PC-9 (cell line): ENCODE measurements at regions of chr1 and their contacts with region 1.

Region 1: DNA sequence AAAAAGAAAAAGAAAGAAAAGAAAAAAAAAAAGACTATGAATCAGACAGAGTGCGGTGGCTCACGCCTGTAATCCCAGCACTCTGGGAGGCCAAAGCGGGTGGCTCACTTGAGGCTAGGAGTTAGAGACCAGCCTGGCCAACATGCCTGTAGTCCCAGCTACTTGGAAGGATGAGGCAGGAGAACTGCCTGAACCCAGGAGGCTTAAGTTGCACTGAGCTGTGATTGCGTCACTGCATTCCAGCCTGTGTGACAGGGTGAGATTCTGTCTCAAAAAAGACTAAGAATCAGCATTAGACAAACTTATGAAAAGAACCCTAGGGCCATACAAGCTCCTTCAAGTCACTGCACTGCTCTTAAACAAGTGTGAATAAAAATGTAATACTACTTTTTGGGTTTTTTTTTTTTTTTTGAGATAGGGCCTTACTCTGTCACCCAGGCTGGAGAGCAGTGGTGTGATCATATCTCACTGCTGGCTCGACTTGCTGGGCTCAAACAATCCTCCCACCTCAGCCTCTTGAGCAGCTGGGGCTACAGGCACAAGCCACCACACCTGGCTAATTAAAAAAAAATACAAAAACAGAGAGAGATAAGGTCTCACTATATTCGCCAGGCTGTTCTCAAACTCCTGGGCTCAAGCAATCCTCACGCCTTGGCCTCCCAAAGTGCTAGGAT is 17.0 kb downstream of the PSMB4 start:
- DNase-seq: no peak
- H3K4me3 ChIP-seq: no peak overlapping the region
- H3K27ac ChIP-seq: no peak overlapping the region
- H3K4me1 ChIP-seq: no peaks in the 10 kb centered on the region
- H3K27me3 ChIP-seq: no peaks in the 10 kb centered on the region
- CTCF ChIP-seq: no peak

Region 2: DNA sequence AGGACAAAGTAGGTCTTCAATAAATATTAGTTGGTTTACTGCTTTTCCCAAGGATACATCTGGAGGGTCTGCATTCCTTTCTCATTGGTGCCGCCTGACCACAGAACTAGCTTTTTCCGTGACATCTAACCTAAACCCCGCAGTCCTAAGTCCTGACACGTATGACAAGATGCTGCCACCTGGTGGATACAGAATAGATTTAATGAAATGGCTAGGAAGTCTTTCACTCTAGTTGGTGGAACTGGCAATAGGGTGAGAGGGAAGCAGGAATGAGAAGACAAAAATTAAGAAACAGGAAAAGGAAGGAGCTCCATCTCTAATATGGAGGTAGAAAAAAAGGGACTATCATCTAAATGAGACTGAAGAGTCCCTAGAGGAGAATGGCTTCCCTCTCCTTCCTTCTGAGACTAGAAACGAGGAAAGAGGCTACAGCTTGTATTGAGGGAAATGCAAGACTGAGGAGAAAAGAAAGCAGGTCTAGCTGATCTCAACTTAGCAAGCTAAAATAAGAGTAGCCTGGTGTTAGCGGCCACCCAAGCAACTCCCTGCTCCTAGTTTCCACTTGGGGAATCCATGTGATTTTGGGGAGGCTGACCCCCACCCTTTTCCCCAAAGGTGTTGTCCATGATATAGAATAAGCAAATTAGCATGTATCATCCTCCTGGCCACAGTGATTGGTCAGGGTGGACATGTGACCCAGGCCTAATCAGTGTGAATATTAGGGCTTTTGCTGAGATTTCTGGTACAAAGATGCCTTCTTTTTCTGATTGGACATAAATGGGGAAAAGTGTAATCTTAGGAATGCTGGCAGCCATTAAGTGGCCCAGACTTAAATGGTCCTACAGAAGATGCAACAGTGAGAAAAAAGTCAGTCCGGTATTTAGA is 75.3 kb before region 1 on chr1:
- CTCF ChIA-PET with region 1: no interaction called
- POLR2A ChIA-PET with region 1: interaction called, 12 read pairs
- intact Hi-C with region 1: no loop called
- DNase-seq: peak; percentile 41 to 76
- H3K4me3 ChIP-seq: no peak overlapping the region
- H3K27ac ChIP-seq: peak overlapping the region; percentile 32
- H3K4me1 ChIP-seq: peaks cover 2% of the 10 kb centered on the region; the same call in 1 of the 2 replicates
- H3K27me3 ChIP-seq: no peaks in the 10 kb centered on the region
- CTCF ChIP-seq: peak; percentile 85

Region 3: DNA sequence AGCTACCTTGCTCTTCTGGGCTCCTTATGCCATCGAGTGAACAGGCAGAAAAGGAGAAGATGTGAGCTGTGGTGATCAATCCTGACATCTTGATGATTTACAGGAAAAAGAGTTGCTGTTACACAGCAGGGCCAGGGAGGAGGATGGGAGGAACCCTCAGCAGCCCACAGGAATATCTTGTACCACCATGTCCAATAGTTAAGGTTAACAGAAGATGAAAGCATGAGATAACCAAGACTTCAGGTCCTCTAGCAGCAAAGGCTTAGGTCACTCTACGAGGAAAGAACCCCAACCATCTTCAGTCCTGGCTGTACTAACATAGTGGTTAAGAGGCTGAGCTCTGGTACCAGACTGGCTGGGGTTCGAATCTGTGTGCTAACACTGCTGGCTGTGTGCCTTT is 31.8 kb before region 1 on chr1:
- CTCF ChIA-PET with region 1: no interaction called
- POLR2A ChIA-PET with region 1: no interaction called
- intact Hi-C with region 1: no loop called
- DNase-seq: no peak
- H3K4me3 ChIP-seq: no peak overlapping the region
- H3K27ac ChIP-seq: no peak overlapping the region
- H3K4me1 ChIP-seq: no peaks in the 10 kb centered on the region
- H3K27me3 ChIP-seq: no peaks in the 10 kb centered on the region
- CTCF ChIP-seq: no peak

Region 4: GRCh38 chr1:151539990-151540981 is 123.9 kb after region 1 on chr1 and contains the start of gene TUFT1:
- CTCF ChIA-PET with region 1: no interaction called
- POLR2A ChIA-PET with region 1: no interaction called
- intact Hi-C with region 1: no loop called
- DNase-seq: peak; percentile 85 to 95
- H3K4me3 ChIP-seq: peak within 1 kb of the TSS; percentile 92
- H3K27ac ChIP-seq: peak within 1 kb of the TSS; percentile 95
- H3K4me1 ChIP-seq: peaks cover 60% of the 10 kb centered on the region
- H3K27me3 ChIP-seq: no peaks in the 10 kb centered on the region
- CTCF ChIP-seq: no peak
- total RNA-seq, gene TUFT1: 35.3 and 40.2 TPM in 2 replicates